ENCODE measurements at regions of chr11 and their contacts with region 1.

Region 1: GRCh38 chr11:128905345-128906184 is 14.4 kb downstream of the KCNJ5 start:
- DNase-seq: no peak
- ATAC-seq: peak in 1 of 2 donors; percentile 39
- H3K4me3 ChIP-seq: peak overlapping the region; percentile 52 to 58 (median 55)
- H3K27ac ChIP-seq: peak overlapping the region in 2 of 4 donors; percentile 8 to 30
- H3K4me1 ChIP-seq: peaks cover 7 to 10% of the 10 kb centered on the region in 2 donors
- H3K27me3 ChIP-seq: peaks cover 26 to 39% (median 32%) of the 10 kb centered on the region in 3 donors
- CTCF ChIP-seq: peak in 2 of 5 experiments; percentile 10 to 16
- POLR2A ChIP-seq: no peak

Region 2: DNA sequence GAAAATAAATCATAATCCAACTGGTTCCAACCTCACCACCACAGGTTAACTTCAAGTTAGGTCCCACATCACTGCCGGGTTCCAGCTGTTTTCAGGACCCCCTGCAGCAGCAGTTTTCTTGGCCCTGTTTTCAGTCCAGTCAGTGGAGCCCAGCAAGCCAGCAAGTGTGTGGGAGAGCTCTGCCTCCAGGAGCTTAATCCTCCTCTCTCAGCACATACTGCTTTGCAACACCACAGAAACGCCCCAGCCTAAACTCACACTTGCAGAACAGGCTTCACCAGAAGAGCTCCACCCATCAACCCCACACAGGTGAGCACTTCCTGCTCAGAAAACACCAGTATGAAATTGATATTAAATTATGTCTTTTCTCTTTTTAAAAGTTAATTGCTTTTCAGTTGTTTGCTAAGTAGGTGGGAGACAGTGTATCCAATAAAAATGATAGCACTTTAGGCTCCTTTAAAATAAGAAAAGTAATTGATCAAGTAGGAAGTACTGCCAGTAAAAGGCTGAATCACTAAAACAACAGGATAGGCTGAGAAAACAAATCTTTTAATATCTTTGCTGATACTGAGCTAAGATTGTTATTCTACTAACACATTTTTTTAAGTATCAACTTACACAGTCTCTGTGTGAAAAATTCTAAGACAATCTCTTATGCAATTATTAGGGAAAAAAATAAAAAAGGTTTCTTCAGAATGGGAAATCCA is 118.6 kb after region 1 on chr11:
- in situ Hi-C with region 1: loop called in 1 of 4 experiments (anchors 25 kb)
- intact Hi-C with region 1: no loop called
- DNase-seq: no peak
- ATAC-seq: no peak
- H3K4me3 ChIP-seq: no peak overlapping the region
- H3K27ac ChIP-seq: no peak overlapping the region
- H3K4me1 ChIP-seq: peaks cover 12 to 13% of the 10 kb centered on the region in 2 donors
- H3K27me3 ChIP-seq: no peaks in the 10 kb centered on the region
- CTCF ChIP-seq: no peak
- POLR2A ChIP-seq: no peak

Measured in gastrocnemius medialis (tissue), 4 donors.